Activated CD4-positive, alpha-beta T cell treated with anti-CD3 and anti-CD28 coated beads, Interleukin-2, amount 10 ng/mL, durations not matched to agents 24 days and 14 days (primary cell): ENCODE measurements at regions of chr3 and their contacts with region 1.

Region 1: GRCh38 chr3:124620600-124621063 is 109.6 kb upstream of the UMPS start:
- DNase-seq: peak; percentile 74
- H3K4me3 Mint-ChIP-seq: peak overlapping the region; percentile 57
- H3K27ac Mint-ChIP-seq: peak overlapping the region; percentile 52
- H3K4me1 Mint-ChIP-seq: peaks cover 24% of the 10 kb centered on the region
- H3K27me3 Mint-ChIP-seq: peaks cover 11% of the 10 kb centered on the region

Region 2: GRCh38 chr3:124032648-124033359 is 587.8 kb before region 1 on chr3:
- intact Hi-C with region 1: no loop called
- DNase-seq: peak; percentile 90
- H3K4me3 Mint-ChIP-seq: peak overlapping the region; percentile 80
- H3K27ac Mint-ChIP-seq: peak overlapping the region; percentile 70
- H3K4me1 Mint-ChIP-seq: peaks cover 9% of the 10 kb centered on the region
- H3K27me3 Mint-ChIP-seq: peaks cover 56% of the 10 kb centered on the region

Region 3: DNA sequence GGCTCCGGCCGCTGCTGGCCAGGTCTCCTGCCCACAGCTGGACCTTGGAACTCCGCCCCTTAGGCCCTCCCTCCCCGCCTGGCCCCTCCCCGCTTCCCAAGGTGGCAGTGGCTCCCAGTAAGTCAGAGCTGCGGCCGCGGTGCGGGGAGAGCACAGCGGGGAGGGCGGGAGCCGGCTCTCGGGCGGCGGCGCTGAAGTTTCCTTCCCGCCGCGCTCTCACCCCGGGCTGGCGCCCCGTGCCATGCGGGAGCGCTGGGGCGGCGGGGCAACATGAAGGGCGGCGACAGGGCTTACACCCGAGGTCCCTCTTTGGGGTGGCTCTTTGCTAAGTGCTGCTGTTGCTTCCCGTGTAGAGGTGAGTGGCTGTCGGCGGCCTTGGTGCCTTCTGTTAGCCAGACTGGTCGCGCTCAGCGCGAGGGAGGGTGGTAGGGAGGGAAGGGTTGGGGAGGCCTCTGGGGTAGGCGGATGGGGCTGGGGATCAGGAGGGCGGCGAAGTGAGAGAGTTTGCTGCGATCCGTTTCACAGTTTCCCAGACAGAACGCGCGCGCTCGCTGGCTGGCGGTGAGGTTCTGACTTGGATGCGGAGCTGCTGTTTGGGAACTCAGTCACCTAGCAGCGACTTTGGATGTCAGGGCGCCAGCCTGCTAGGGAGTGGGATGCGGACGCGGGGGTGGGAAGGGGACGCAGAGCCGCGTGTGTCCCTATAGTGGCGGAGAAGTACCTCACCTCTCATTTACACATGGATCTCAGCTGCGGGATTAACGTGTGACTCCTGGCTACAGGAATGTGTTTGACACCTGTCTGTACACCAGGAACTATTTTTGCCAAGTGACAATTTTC is 35.9 kb before region 1 on chr3:
- intact Hi-C with region 1: loop called (anchors 5 kb)
- DNase-seq: peak; percentile 65
- H3K4me3 Mint-ChIP-seq: peak overlapping the region; percentile 70
- H3K27ac Mint-ChIP-seq: no peak overlapping the region
- H3K4me1 Mint-ChIP-seq: peaks cover 7% of the 10 kb centered on the region
- H3K27me3 Mint-ChIP-seq: peaks cover 69% of the 10 kb centered on the region

Region 4: GRCh38 chr3:124639406-124640237 is 19.0 kb after region 1 on chr3:
- intact Hi-C with region 1: loop called (anchors 2 kb)
- DNase-seq: peak; percentile 78
- H3K4me3 Mint-ChIP-seq: peak overlapping the region; percentile 74
- H3K27ac Mint-ChIP-seq: peak overlapping the region; percentile 76
- H3K4me1 Mint-ChIP-seq: peaks cover 41% of the 10 kb centered on the region
- H3K27me3 Mint-ChIP-seq: peaks cover 43% of the 10 kb centered on the region

Region 5: GRCh38 chr3:124688581-124689454 is 68.2 kb after region 1 on chr3:
- intact Hi-C with region 1: loop called (anchors 10 kb)
- DNase-seq: peak; percentile 92
- H3K4me3 Mint-ChIP-seq: no peak overlapping the region
- H3K27ac Mint-ChIP-seq: no peak overlapping the region
- H3K4me1 Mint-ChIP-seq: peaks cover 10% of the 10 kb centered on the region
- H3K27me3 Mint-ChIP-seq: peaks cover 33% of the 10 kb centered on the region

Region 6: DNA sequence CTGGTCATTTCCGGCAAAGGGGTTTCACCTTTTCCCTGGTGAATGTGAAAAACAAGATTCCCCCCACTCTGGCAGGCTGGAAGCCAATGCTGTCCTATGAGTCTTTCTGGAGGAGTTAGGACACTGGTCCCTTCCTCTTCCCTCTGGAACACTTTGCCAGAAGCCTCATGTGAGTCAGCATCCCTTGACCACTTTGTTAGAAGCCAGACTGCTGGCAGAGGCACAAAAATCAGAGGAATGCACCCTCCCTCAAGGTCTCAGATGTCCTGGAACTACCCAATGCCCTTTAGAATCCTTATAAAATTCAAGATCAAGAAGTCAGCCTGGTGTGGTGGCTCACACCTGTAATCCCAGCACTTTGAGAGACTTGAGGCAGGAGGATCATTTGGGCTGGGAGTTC is 240.0 kb after region 1 on chr3:
- intact Hi-C with region 1: no loop called
- DNase-seq: no peak
- H3K4me3 Mint-ChIP-seq: no peak overlapping the region
- H3K27ac Mint-ChIP-seq: no peak overlapping the region
- H3K4me1 Mint-ChIP-seq: no peaks in the 10 kb centered on the region
- H3K27me3 Mint-ChIP-seq: peaks cover 21% of the 10 kb centered on the region

Region 7: GRCh38 chr3:125129512-125129962 is 508.9 kb after region 1 on chr3:
- intact Hi-C with region 1: no loop called
- DNase-seq: no peak
- H3K4me3 Mint-ChIP-seq: no peak overlapping the region
- H3K27ac Mint-ChIP-seq: no peak overlapping the region
- H3K4me1 Mint-ChIP-seq: peaks cover 44% of the 10 kb centered on the region
- H3K27me3 Mint-ChIP-seq: peaks cover 23% of the 10 kb centered on the region